Naive thymus-derived CD4-positive, alpha-beta T cell (primary cell): ENCODE measurements at regions of chr13 and their contacts with region 1.

Region 1: DNA sequence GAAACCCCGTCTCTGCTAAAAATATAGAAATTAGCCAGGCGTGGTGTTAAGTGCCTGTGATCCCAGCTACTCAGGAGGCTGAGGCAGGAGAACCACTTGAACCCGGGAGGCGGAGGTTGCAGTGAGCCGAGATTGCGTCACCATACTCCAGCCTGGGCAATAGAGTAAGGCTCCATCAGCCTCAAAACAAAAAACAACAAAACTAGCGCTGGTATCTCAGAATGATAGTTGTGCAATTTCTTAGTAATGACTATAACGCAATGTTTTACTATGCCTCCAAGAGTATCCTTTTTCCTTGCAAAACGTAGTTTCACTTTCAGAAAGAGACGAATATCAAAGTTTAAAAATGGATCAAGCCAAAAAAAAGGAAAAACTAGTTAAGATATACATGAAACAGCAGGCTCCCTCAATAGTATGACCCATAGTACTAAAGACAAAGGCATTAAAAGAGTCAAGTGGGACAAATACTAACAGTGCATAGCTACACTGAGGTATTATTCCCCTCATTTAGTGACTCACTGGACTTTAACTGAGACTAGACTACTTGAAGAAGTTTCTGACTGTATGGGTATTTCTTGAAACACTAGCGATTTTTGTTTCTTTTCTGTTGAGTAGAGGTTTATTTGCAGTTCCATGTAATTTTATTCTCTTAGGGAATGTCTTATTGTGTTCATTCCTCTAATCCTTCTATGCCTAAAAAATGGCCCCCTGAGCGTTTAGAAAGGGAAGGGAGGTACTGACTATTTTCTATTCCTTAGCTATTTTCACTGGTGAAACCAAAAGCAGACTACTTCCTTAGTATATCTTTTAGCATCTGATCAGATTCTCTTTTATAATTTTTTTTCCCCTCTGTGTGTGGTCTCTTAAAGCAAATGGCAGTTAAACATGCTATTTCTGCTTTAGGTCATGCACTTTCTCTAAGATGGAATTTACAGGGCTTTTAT is 10.4 kb upstream of the ITM2B start:
- DNase-seq: peak in 2 of 9 donors; percentile 25 to 30
- ATAC-seq: peak; percentile 58
- H3K4me3 ChIP-seq: peak overlapping the region; percentile 9
- H3K4me3 Mint-ChIP-seq: peak overlapping the region; percentile 48 to 91 (median 78)
- H3K27ac ChIP-seq: peak overlapping the region; percentile 83
- H3K27ac Mint-ChIP-seq: peak overlapping the region; percentile 38 to 99 (median 97)
- H3K4me1 ChIP-seq: peaks cover 40 to 60% of the 10 kb centered on the region in 2 donors
- H3K4me1 Mint-ChIP-seq: peaks cover 41 to 88% (median 74%) of the 10 kb centered on the region in 7 donors
- H3K27me3 ChIP-seq: no peaks in the 10 kb centered on the region
- H3K27me3 Mint-ChIP-seq: peaks cover 0 to 32% (median 0%) of the 10 kb centered on the region in 5 donors

Region 2: GRCh38 chr13:48050550-48050949 is 172.1 kb before region 1 on chr13:
- CTCF ChIA-PET with region 1: no interaction called
- POLR2A ChIA-PET with region 1: no interaction called
- intact Hi-C with region 1: no loop called
- DNase-seq: no peak
- ATAC-seq: no peak
- H3K4me3 ChIP-seq: no peak overlapping the region
- H3K4me3 Mint-ChIP-seq: no peak overlapping the region
- H3K27ac ChIP-seq: no peak overlapping the region
- H3K27ac Mint-ChIP-seq: peak overlapping the region in 1 of 9 donors; percentile 8
- H3K4me1 ChIP-seq: no peaks in the 10 kb centered on the region
- H3K4me1 Mint-ChIP-seq: peaks cover 0 to 8% (median 0%) of the 10 kb centered on the region in 7 donors
- H3K27me3 ChIP-seq: no peaks in the 10 kb centered on the region
- H3K27me3 Mint-ChIP-seq: no peaks in the 10 kb centered on the region

Region 3: DNA sequence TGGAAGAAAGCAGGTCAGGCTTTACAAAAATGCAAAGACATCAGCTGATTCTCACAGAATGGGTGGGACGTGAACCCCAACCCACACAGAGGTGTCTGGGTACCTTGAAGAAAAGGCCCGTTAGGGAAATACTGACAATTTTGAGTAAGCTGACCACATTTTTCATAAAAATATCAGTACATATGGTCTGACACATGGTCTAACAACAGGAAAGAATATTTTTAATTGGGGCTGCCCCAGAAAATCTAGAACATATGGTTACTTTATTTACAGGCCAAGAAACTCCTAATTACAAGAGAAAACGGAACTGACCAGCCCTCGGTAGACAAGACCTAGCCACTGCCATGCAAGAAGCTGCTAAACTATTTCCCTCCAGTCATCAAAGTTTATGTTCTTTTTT is 38.4 kb before region 1 on chr13:
- CTCF ChIA-PET with region 1: interaction called, 9 read pairs
- POLR2A ChIA-PET with region 1: interaction called, 68 read pairs
- intact Hi-C with region 1: loop called (anchors 1 kb)
- DNase-seq: no peak
- ATAC-seq: no peak
- H3K4me3 ChIP-seq: no peak overlapping the region
- H3K4me3 Mint-ChIP-seq: peak overlapping the region in 9 of 10 donors; percentile 41 to 79 (median 65)
- H3K27ac ChIP-seq: peak overlapping the region; percentile 42
- H3K27ac Mint-ChIP-seq: peak overlapping the region in 8 of 9 donors; percentile 82 to 97 (median 90)
- H3K4me1 ChIP-seq: peaks cover 8 to 58% of the 10 kb centered on the region in 2 donors
- H3K4me1 Mint-ChIP-seq: peaks cover 40 to 81% (median 64%) of the 10 kb centered on the region in 7 donors
- H3K27me3 ChIP-seq: no peaks in the 10 kb centered on the region
- H3K27me3 Mint-ChIP-seq: peaks cover 0 to 10% (median 0%) of the 10 kb centered on the region in 5 donors

Region 4: GRCh38 chr13:48194379-48194754 is 28.3 kb before region 1 on chr13:
- CTCF ChIA-PET with region 1: interaction called, 7 read pairs
- POLR2A ChIA-PET with region 1: interaction called, 68 read pairs
- intact Hi-C with region 1: no loop called
- DNase-seq: peak in 1 of 9 donors; percentile 20
- ATAC-seq: peak; percentile 86
- H3K4me3 ChIP-seq: no peak overlapping the region
- H3K4me3 Mint-ChIP-seq: peak overlapping the region in 9 of 10 donors; percentile 6 to 82 (median 56)
- H3K27ac ChIP-seq: no peak overlapping the region
- H3K27ac Mint-ChIP-seq: peak overlapping the region in 7 of 9 donors; percentile 14 to 86 (median 48)
- H3K4me1 ChIP-seq: peaks cover 4 to 12% of the 10 kb centered on the region in 2 donors
- H3K4me1 Mint-ChIP-seq: peaks cover 16 to 67% (median 44%) of the 10 kb centered on the region in 7 donors
- H3K27me3 ChIP-seq: no peaks in the 10 kb centered on the region
- H3K27me3 Mint-ChIP-seq: peaks cover 0 to 14% (median 0%) of the 10 kb centered on the region in 5 donors

Region 5: DNA sequence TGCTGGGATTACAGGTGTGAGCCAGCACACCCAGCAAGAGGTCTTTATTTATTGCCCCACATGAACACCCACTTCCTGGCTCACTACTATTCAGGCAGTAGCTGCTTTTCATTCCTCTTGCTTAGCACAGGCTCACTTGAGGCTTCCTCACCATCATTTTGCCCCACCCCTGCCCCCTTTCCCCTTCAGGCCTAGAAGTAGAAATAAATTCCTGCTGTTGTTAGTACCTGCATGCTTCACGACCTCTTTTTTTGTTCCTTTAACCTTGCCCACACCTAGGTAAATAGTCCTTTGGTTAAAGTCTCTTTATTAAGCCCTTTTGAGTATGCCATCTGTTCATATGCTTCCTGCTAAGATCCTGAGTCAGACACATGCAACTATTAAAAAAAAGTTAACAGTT is 23.1 kb before region 1 on chr13:
- CTCF ChIA-PET with region 1: interaction called, 5 read pairs
- POLR2A ChIA-PET with region 1: interaction called, 20 read pairs
- intact Hi-C with region 1: no loop called
- DNase-seq: no peak
- ATAC-seq: no peak
- H3K4me3 ChIP-seq: no peak overlapping the region
- H3K4me3 Mint-ChIP-seq: peak overlapping the region in 6 of 10 donors; percentile 1 to 44 (median 10)
- H3K27ac ChIP-seq: no peak overlapping the region
- H3K27ac Mint-ChIP-seq: peak overlapping the region in 8 of 9 donors; percentile 46 to 82 (median 69)
- H3K4me1 ChIP-seq: peaks cover under 1 to 10% of the 10 kb centered on the region in 2 donors
- H3K4me1 Mint-ChIP-seq: peaks cover 5 to 36% (median 28%) of the 10 kb centered on the region in 7 donors
- H3K27me3 ChIP-seq: no peaks in the 10 kb centered on the region
- H3K27me3 Mint-ChIP-seq: peaks cover 0 to 35% (median 0%) of the 10 kb centered on the region in 5 donors

Region 6: DNA sequence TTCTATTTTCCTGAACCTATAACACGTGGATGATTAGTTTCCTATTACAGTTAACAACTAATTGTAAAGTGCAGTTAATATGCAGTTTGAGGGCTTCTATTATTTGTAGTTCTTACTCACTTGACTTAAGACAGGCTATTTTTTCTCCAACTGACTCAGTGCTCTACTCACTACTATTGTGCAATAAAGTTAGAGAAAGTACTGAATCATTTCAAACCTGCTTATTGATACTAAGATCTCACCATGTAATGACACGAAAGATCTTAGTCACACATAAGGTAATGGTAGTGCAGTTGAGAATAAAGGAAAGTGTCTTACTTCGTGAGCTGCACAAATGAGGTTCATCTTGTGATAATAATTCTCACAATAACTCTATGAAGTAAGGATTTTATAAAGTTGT is 12.5 kb before region 1 on chr13:
- CTCF ChIA-PET with region 1: no interaction called
- POLR2A ChIA-PET with region 1: interaction called, 10 read pairs
- intact Hi-C with region 1: loop called in 1 of 2 experiments (anchors 1 kb)
- DNase-seq: no peak
- ATAC-seq: peak; percentile 54
- H3K4me3 ChIP-seq: no peak overlapping the region
- H3K4me3 Mint-ChIP-seq: no peak overlapping the region
- H3K27ac ChIP-seq: no peak overlapping the region
- H3K27ac Mint-ChIP-seq: peak overlapping the region in 1 of 9 donors; percentile 37
- H3K4me1 ChIP-seq: peaks cover 0 to 12% of the 10 kb centered on the region in 2 donors
- H3K4me1 Mint-ChIP-seq: peaks cover 0 to 27% (median 19%) of the 10 kb centered on the region in 7 donors
- H3K27me3 ChIP-seq: no peaks in the 10 kb centered on the region
- H3K27me3 Mint-ChIP-seq: peaks cover 0 to 37% (median 0%) of the 10 kb centered on the region in 5 donors

Region 7: DNA sequence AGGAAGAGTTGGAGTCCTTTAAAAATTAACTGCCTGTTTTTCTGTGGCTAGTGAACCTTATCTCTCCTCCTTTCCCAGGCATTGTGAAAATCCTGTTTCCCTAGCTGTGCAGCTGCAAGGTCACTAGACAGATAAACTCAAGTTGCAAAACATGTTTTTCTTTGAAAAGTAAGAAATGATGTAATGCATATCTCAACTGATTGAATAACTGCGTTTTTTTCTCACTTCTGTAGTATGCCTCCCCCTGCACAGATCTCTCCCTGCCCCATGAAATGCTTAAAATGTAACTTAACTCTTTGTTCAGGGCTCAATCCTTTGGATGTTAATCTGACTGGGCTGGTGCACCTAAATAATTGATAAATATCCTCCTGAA is 403.4 kb after region 1 on chr13:
- CTCF ChIA-PET with region 1: no interaction called
- POLR2A ChIA-PET with region 1: no interaction called
- intact Hi-C with region 1: no loop called
- DNase-seq: no peak
- ATAC-seq: no peak
- H3K4me3 ChIP-seq: no peak overlapping the region
- H3K4me3 Mint-ChIP-seq: no peak overlapping the region
- H3K27ac ChIP-seq: no peak overlapping the region
- H3K27ac Mint-ChIP-seq: no peak overlapping the region
- H3K4me1 ChIP-seq: no peaks in the 10 kb centered on the region
- H3K4me1 Mint-ChIP-seq: peaks cover 0 to 1% (median 0%) of the 10 kb centered on the region in 7 donors
- H3K27me3 ChIP-seq: no peaks in the 10 kb centered on the region
- H3K27me3 Mint-ChIP-seq: no peaks in the 10 kb centered on the region

Region 8: GRCh38 chr13:48804821-48805601 is 582.4 kb after region 1 on chr13:
- CTCF ChIA-PET with region 1: no interaction called
- POLR2A ChIA-PET with region 1: no interaction called
- intact Hi-C with region 1: no loop called
- DNase-seq: peak in 1 of 9 donors; percentile 10
- ATAC-seq: no peak
- H3K4me3 ChIP-seq: no peak overlapping the region
- H3K4me3 Mint-ChIP-seq: peak overlapping the region in 8 of 10 donors; percentile 2 to 54 (median 10)
- H3K27ac ChIP-seq: peak overlapping the region; percentile 9
- H3K27ac Mint-ChIP-seq: peak overlapping the region in 8 of 9 donors; percentile 0 to 84 (median 58)
- H3K4me1 ChIP-seq: peaks cover 8 to 20% of the 10 kb centered on the region in 2 donors
- H3K4me1 Mint-ChIP-seq: peaks cover 15 to 32% (median 23%) of the 10 kb centered on the region in 7 donors
- H3K27me3 ChIP-seq: no peaks in the 10 kb centered on the region
- H3K27me3 Mint-ChIP-seq: peaks cover 0 to 2% (median 0%) of the 10 kb centered on the region in 5 donors

Region 9: DNA sequence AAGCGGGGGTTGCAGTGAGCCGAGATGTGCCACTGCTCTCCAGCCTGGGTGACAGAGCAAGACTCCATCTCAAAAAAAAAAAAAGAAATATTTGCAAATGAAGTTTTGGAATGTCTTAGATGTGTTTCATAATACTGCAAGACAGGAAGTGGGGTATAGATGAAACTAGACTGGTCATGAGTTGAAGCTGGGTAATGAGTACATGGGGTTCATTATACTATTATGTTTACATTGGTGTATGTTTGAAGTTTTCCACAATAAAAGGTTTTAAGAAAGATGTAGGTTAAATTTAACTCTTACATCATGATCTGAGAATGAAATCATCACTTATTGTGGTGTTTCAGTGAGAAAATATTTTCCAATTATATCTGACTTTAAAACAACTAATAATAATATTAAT is 772.1 kb after region 1 on chr13:
- CTCF ChIA-PET with region 1: no interaction called
- POLR2A ChIA-PET with region 1: no interaction called
- intact Hi-C with region 1: no loop called
- DNase-seq: no peak
- ATAC-seq: no peak
- H3K4me3 ChIP-seq: no peak overlapping the region
- H3K4me3 Mint-ChIP-seq: no peak overlapping the region
- H3K27ac ChIP-seq: no peak overlapping the region
- H3K27ac Mint-ChIP-seq: no peak overlapping the region
- H3K4me1 ChIP-seq: no peaks in the 10 kb centered on the region
- H3K4me1 Mint-ChIP-seq: peaks cover 7 to 48% (median 41%) of the 10 kb centered on the region in 7 donors
- H3K27me3 ChIP-seq: no peaks in the 10 kb centered on the region
- H3K27me3 Mint-ChIP-seq: no peaks in the 10 kb centered on the region